ENCODE measurements at regions of chr9 and their contacts with region 1.

Region 1: GRCh38 chr9:84668196-84669012 is 1.1 kb upstream of the NTRK2 start:
- DNase-seq: peak; percentile 81
- ATAC-seq: peak; percentile 89 to 90

Region 2: GRCh38 chr9:84404095-84404686 is 264.2 kb before region 1 on chr9:
- intact Hi-C with region 1: loop called in 1 of 2 experiments (anchors 5 kb)
- DNase-seq: no peak
- ATAC-seq: no peak

Region 3: DNA sequence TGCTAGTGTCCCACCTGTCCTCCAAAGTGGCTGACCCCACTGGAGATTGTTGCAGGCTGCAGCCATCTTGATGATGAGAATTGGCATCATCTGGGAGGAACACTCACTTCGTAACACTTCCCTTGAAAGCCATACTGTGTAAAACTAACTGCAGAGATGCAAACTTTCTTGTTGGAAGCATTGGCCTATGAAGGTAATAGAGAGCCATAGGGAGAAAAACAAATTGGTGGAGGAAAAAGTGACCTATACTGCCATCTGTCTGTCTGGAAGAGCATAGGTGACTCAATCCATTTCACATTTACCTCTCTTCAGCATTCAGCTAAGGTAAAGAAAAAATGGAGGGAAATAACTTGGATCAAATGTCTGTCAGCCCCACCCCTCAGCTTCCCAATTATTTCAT is 474.6 kb after region 1 on chr9:
- intact Hi-C with region 1: loop called in 1 of 2 experiments (anchors 10 kb)
- DNase-seq: no peak
- ATAC-seq: peak in 1 of 2 donors; percentile 34

Region 4: DNA sequence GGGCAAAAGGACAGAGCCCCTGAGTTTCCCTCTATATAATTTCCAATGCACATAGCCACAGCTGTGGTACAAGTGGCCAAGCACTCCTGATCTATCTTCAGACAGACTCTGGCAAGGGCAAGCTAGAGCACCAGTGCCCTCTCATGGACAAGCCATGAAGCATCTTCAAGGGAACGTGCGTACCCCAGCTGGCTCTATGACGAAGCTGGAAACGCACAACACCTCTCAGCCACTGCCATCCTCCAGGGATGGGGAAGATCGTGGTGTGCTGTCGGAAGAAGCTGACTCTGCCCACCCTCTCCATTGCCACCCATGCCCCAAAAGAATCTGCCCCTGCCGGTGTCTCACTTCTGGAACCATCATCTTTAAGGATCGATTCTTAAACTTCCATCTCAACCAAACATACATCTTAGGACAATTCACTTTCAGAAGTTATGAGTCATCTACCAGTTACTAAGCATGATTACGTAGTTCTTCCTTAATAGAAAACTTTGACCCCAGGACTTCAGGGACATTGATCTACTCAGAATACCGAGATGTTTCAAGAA is 590.5 kb after region 1 on chr9:
- intact Hi-C with region 1: loop called in 1 of 2 experiments (anchors 10 kb)
- DNase-seq: peak; percentile 64
- ATAC-seq: peak; percentile 96

Measured in left cardiac atrium (tissue), 4 donors.